A549 (cell line): ENCODE measurements at regions of chr19 and their contacts with region 1.

Region 1: GRCh38 chr19:48578891-48579290 is 26.9 kb downstream of the SULT2B1 start:
- DNase-seq: no peak
- ATAC-seq: peak in 1 of 2 experiments; percentile 11; a peak in 1 of 6 replicates
- H3K4me3 ChIP-seq: no peak overlapping the region
- H3K27ac ChIP-seq: peak overlapping the region in 1 of 2 experiments; percentile 5; a peak in 2 of 6 replicates
- H3K4me1 ChIP-seq: peaks cover 27% of the 10 kb centered on the region
- CTCF ChIP-seq: no peak
- EP300 ChIP-seq: no peak
- POLR2A ChIP-seq: no peak
- RAD21 ChIP-seq: no peak

Region 2: GRCh38 chr19:48543121-48544056 is 35.5 kb before region 1 on chr19:
- CTCF ChIA-PET with region 1: interaction called, 35 read pairs
- POLR2A ChIA-PET with region 1: interaction called, 3 read pairs
- DNase-seq: peak; percentile 69 to 78
- ATAC-seq: peak; percentile 72 to 79
- H3K4me3 ChIP-seq: no peak overlapping the region
- H3K27ac ChIP-seq: peak overlapping the region; percentile 62 to 85
- H3K4me1 ChIP-seq: peaks cover 41% of the 10 kb centered on the region
- CTCF ChIP-seq: no peak
- EP300 ChIP-seq: no peak
- POLR2A ChIP-seq: no peak
- RAD21 ChIP-seq: no peak

Region 3: DNA sequence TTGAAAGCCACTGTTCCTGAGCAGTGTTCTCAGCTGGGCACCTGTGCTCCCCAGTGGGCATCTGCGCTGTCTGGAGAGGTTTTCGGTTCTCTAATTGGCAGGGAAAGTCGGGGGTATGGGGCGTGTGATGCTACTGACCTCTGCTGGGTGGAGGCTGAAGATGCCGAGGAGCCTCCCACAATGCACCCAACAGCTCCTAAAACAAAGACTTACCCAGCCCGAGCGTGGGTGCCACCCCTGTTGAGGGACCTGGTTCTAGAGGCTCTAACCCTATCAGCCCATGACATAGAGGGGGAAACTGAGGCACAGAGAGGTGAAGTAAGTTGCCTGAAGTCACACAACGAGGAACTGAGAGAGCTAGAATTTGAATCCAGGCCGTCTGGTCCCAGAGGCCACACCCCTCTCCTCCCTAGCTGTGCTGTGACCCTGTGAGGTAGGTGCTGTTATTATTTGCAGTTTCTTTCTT is 29.9 kb after region 1 on chr19:
- CTCF ChIA-PET with region 1: interaction called, 396 read pairs
- POLR2A ChIA-PET with region 1: no interaction called
- DNase-seq: peak; percentile 83 to 88
- ATAC-seq: peak; percentile 75 to 82
- H3K4me3 ChIP-seq: no peak overlapping the region
- H3K27ac ChIP-seq: peak overlapping the region; percentile 65 to 78
- H3K4me1 ChIP-seq: peaks cover 5% of the 10 kb centered on the region; the same call in 1 of the 3 replicates
- CTCF ChIP-seq: peak; percentile 92
- EP300 ChIP-seq: no peak
- POLR2A ChIP-seq: no peak
- RAD21 ChIP-seq: peak; percentile 94 to 98

Region 4: DNA sequence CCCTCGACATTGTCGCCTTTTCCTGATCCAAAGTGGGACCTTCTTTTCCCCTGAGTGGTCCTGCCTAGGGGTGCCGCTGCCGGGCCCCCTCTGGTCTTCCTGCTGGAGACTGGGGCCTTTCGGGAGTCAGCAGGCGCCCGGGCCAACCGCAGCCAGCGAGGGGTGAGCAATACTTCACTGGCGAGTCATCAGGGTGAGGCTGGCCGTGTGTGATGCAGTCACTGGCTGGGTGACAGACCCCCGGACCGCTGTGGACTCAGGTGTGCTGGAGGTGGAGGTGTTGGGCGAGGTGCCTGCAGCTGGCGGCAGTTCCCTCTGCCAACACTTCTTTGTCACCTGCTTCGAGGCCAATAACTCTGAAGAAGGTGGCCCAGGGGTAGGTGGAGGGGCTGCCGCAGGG is 463.3 kb after region 1 on chr19:
- CTCF ChIA-PET with region 1: no interaction called
- POLR2A ChIA-PET with region 1: no interaction called
- DNase-seq: peak in 1 of 2 experiments; percentile 35
- ATAC-seq: 0 out of 6 replicates have a peak, but pooled peaks of 1 of the 2 experiments have one; percentile 20
- H3K4me3 ChIP-seq: no peak overlapping the region
- H3K27ac ChIP-seq: peak overlapping the region; percentile 21 to 65; a peak in 4 of 6 replicates
- H3K4me1 ChIP-seq: peaks cover 32% of the 10 kb centered on the region
- CTCF ChIP-seq: no peak
- EP300 ChIP-seq: no peak
- POLR2A ChIP-seq: no peak
- RAD21 ChIP-seq: no peak